ENCODE measurements at regions of chr12 and their contacts with region 1.

Region 1: DNA sequence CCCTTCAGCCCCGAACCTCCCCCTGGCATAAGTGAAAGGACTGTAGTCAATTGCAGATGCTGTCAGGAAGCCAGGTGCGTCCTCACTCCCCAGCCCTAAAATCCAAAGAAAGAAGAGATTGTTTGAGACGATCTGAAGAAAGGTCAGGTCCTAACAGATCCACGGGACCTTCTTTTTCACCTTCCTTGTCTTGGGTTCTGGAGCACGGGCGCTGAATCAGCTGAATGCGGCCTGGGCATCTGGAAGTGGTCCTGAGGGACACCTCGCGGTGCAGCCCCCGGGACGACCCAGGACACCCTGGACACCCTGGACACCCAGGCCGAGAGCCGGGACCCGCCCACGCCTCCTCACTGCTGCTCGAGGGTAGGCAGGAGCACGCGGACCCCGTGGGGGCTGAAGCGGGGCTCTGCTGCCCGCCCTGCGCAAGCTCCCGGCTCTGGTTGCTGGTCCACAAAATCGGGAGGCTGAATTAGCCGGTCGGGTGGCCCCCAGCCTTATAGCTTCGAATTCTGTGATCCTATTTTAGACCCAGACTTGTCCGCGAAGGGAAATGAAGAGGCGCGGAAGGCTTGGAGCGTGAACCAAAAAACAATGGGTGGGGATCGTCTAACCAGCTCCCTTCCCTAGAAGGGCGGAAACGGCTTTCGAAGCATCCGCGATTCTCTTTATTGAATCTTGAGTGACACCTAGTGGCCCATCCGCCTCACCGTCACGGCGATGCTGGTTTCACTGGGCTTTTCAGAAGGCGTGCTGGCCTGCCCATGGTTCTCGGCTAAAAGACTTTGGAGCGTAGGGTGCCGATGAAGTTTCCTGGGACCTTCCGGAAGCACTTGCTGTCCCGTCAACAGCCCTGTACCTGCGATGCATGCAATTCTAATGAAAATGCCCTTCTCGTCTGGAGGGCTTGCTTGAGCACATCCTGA is 46.4 kb upstream of the PLXNC1 start:
- DNase-seq: peak; percentile 80
- H3K4me3 ChIP-seq: peak overlapping the region; percentile 63
- H3K27ac ChIP-seq: peak overlapping the region in 1 of 2 experiments; percentile 35; a peak in 1 of 4 replicates
- H3K4me1 ChIP-seq: peaks cover 8 to 14% of the 10 kb centered on the region in 2 experiments; a peak in 2 of 4 replicates
- H3K27me3 ChIP-seq: no peaks in the 10 kb centered on the region
- CTCF ChIP-seq: peak; percentile 87
- EP300 ChIP-seq: no peak
- RAD21 ChIP-seq: peak; percentile 88

Region 2: GRCh38 chr12:93419388-93420034 is 682.5 kb before region 1 on chr12:
- CTCF ChIA-PET with region 1: interaction called, 17 read pairs
- POLR2A ChIA-PET with region 1: no interaction called
- DNase-seq: peak; percentile 41
- H3K4me3 ChIP-seq: no peak overlapping the region
- H3K27ac ChIP-seq: peak overlapping the region in 1 of 2 experiments; percentile 47; a peak in 2 of 4 replicates
- H3K4me1 ChIP-seq: peaks cover 7 to 24% of the 10 kb centered on the region in 2 experiments; a peak in 3 of 4 replicates
- H3K27me3 ChIP-seq: no peaks in the 10 kb centered on the region
- CTCF ChIP-seq: peak; percentile 77
- EP300 ChIP-seq: no peak
- RAD21 ChIP-seq: peak; percentile 58

Region 3: DNA sequence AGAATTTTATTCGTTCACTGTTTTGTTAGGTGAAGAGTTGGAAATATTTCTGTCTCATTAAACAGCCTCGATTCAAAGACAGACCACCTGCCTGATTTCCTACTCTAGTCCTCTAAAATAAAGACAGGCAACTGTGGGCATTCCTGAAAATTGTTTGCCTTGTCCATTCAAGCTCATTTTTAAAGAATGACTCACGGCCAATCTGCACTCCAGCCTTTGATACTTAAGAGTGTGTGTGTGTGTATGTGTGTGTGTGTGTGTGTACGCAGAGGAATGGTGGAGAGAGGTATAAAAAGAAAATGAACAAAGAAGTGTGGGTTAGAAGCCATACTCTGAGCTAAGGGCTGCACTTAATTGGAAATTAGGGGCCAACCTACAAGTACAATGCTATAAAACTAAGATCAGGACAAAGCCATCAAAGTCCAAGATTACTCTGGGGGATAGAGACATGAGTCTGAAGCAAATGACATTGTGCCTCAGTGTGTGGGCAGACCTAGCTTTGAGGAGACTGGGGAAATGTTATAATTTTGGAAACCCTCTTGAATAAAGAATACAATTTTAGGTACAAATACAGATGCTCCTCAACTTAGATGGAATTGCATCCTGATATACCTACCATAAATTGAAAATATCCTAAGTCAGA is 575.1 kb before region 1 on chr12:
- CTCF ChIA-PET with region 1: interaction called, 46 read pairs
- POLR2A ChIA-PET with region 1: no interaction called
- DNase-seq: no peak
- H3K4me3 ChIP-seq: no peak overlapping the region
- H3K27ac ChIP-seq: no peak overlapping the region
- H3K4me1 ChIP-seq: no peaks in the 10 kb centered on the region; a peak in 1 of 4 replicates
- H3K27me3 ChIP-seq: no peaks in the 10 kb centered on the region
- CTCF ChIP-seq: no peak
- EP300 ChIP-seq: no peak
- RAD21 ChIP-seq: no peak

Region 4: DNA sequence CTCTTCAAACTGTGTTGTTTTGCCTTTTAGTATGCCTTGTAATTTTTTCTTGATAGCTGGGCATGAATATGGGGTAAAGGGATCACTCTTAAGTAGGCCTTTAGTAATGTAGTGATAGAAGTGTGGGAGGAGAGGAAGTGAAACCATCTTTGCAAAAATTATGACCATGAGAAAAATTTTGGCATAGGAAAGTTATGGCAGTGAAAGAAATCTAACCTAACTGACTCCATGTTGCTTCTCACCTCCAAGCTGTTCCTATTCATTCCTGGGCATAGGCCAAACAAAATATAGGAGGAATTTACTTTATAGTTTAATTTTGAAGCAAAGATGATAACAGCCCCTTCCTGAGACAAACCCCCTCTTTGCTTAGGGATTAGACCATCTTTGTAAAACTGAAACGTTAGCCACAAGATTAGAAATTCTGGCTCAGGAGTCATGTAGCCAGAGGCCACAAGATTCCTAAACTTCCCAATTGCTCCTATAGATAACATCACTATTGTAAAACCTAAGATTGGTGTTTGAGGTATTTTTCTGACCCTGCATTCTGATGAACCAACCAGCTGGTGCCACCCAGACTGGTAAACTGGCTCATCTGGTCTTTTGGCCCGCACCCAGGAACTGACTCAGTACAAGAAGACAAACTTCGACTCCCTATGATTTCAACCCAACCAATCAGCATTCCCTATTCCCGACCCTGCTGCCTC is 379.0 kb before region 1 on chr12:
- CTCF ChIA-PET with region 1: interaction called, 12 read pairs
- POLR2A ChIA-PET with region 1: no interaction called
- DNase-seq: no peak
- H3K4me3 ChIP-seq: no peak overlapping the region
- H3K27ac ChIP-seq: no peak overlapping the region; a peak in 1 of 4 replicates
- H3K4me1 ChIP-seq: peaks cover 3 to 10% of the 10 kb centered on the region in 2 experiments; a peak in 2 of 4 replicates
- H3K27me3 ChIP-seq: no peaks in the 10 kb centered on the region
- CTCF ChIP-seq: no peak
- EP300 ChIP-seq: 0 out of 4 replicates have a peak, but pooled peaks of 1 of the 2 experiments have one; percentile 14
- RAD21 ChIP-seq: no peak

Region 5: GRCh38 chr12:93766796-93767523 is 335.0 kb before region 1 on chr12:
- CTCF ChIA-PET with region 1: interaction called, 128 read pairs
- POLR2A ChIA-PET with region 1: interaction called, 3 read pairs
- DNase-seq: peak; percentile 41
- H3K4me3 ChIP-seq: no peak overlapping the region
- H3K27ac ChIP-seq: peak overlapping the region in 1 of 2 experiments; percentile 52; a peak in 2 of 4 replicates
- H3K4me1 ChIP-seq: peaks cover 0 to 21% of the 10 kb centered on the region in 2 experiments; a peak in 3 of 4 replicates
- H3K27me3 ChIP-seq: no peaks in the 10 kb centered on the region
- CTCF ChIP-seq: peak; percentile 76
- EP300 ChIP-seq: no peak
- RAD21 ChIP-seq: peak; percentile 87

Region 6: DNA sequence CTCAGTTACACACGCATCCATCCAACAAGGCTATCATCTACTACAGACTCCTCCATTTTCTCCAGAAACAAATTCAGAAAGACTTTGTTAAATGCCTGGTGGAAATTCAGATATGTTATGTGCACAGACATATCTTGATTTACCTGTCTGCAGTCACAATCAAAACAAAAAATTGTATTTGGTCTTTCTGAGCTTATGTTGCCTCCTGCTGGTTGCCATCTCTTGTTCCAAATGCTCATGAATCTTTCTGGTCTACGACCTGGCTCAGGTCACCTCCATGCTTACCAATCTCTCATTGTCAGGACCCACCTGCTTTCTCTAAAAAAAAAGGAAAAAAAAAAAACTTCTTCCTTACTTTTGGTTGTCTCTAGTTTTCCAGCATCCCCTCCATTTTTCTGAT is 122.8 kb before region 1 on chr12:
- CTCF ChIA-PET with region 1: interaction called, 29 read pairs
- POLR2A ChIA-PET with region 1: no interaction called
- DNase-seq: no peak
- H3K4me3 ChIP-seq: no peak overlapping the region
- H3K27ac ChIP-seq: no peak overlapping the region
- H3K4me1 ChIP-seq: no peaks in the 10 kb centered on the region; a peak in 1 of 4 replicates
- H3K27me3 ChIP-seq: no peaks in the 10 kb centered on the region
- CTCF ChIP-seq: peak; percentile 56
- EP300 ChIP-seq: no peak
- RAD21 ChIP-seq: peak; percentile 82

Region 7: GRCh38 chr12:94126067-94126466 is 24.1 kb after region 1 on chr12:
- CTCF ChIA-PET with region 1: interaction called, 20 read pairs
- POLR2A ChIA-PET with region 1: no interaction called
- DNase-seq: no peak
- H3K4me3 ChIP-seq: no peak overlapping the region
- H3K27ac ChIP-seq: no peak overlapping the region
- H3K4me1 ChIP-seq: no peaks in the 10 kb centered on the region
- H3K27me3 ChIP-seq: peaks cover 22% of the 10 kb centered on the region; the same call in 1 of the 2 replicates
- CTCF ChIP-seq: no peak
- EP300 ChIP-seq: no peak
- RAD21 ChIP-seq: no peak

Measured in SK-N-SH (cell line).